ENCODE measurements at regions of chrX and their contacts with region 1.

Region 1: GRCh38 chrX:51743179-51743957 is at the start of gene GSPT2:
- DNase-seq: peak; percentile 34
- ATAC-seq: peak; percentile 99
- H3K4me3 ChIP-seq: peak within 1 kb of the TSS; percentile 85
- H3K27ac ChIP-seq: peak within 1 kb of the TSS; percentile 68
- H3K4me1 ChIP-seq: no peaks in the 10 kb centered on the region
- H3K27me3 ChIP-seq: no peaks in the 10 kb centered on the region
- CTCF ChIP-seq: no peak
- EP300 ChIP-seq: no peak
- POLR2A ChIP-seq: peak; percentile 95
- RAD21 ChIP-seq: no peak
- polyA plus RNA-seq, gene GSPT2: 3.4 to 5.1 TPM

Region 2: GRCh38 chrX:51759055-51759839 is 15.9 kb after region 1 on chrX:
- CTCF ChIA-PET with region 1: no interaction called
- POLR2A ChIA-PET with region 1: no interaction called
- RAD21 ChIA-PET with region 1: no interaction called
- SMC1A ChIA-PET with region 1: no interaction called
- in situ Hi-C with region 1: no loop called
- intact Hi-C with region 1: no loop called
- DNase-seq: no peak
- ATAC-seq: no peak
- H3K4me3 ChIP-seq: no peak overlapping the region
- H3K27ac ChIP-seq: no peak overlapping the region
- H3K4me1 ChIP-seq: no peaks in the 10 kb centered on the region
- H3K27me3 ChIP-seq: no peaks in the 10 kb centered on the region
- CTCF ChIP-seq: no peak
- EP300 ChIP-seq: no peak
- POLR2A ChIP-seq: no peak
- RAD21 ChIP-seq: no peak

Region 3: DNA sequence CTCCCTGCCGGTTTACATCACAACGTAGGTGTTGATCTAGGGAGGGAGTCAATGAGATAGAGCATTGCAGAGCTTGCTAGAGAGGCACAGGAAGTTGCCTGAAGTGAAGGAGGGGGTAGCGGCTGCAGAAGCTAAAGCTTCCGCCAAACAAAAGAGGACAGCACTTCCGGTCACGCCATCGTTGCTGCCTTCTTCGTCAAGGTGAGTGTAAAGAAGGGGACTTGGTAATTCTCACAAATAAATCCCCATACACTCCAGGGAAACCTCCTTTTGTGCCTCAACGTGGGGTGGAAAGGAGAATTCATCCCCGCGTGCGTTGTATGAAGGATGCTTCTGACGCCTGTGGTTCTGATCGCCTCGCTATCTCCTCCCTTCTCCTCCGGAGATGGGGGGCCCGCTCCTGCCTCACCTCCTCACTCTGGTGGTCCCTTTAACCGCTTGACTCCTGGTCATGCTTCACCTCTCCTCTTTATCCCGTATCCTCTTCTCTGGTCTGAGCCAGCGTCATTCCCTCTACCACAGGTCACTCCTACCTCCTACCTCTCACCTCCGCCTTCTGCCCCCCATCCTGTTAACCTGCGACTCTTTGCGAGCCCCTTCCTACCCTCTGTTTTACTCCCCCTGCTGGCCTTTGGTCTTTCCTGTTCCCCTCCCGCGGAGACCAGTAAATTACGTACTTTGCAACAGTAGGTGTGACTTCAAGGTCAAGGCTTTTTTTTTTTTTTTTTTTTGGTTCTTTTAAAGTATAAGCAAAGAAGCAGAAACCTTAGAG is 59.7 kb after region 1 on chrX:
- CTCF ChIA-PET with region 1: no interaction called
- POLR2A ChIA-PET with region 1: no interaction called
- RAD21 ChIA-PET with region 1: no interaction called
- SMC1A ChIA-PET with region 1: no interaction called
- in situ Hi-C with region 1: no loop called
- intact Hi-C with region 1: loop called (anchors 1 kb)
- DNase-seq: peak; percentile 15
- ATAC-seq: peak; percentile 96
- H3K4me3 ChIP-seq: peak overlapping the region; percentile 66
- H3K27ac ChIP-seq: peak overlapping the region; percentile 30
- H3K4me1 ChIP-seq: no peaks in the 10 kb centered on the region
- H3K27me3 ChIP-seq: no peaks in the 10 kb centered on the region
- CTCF ChIP-seq: peak; percentile 33 to 48 (median 40); a peak in 4 of 6 replicates
- EP300 ChIP-seq: no peak
- POLR2A ChIP-seq: peak; percentile 46
- RAD21 ChIP-seq: peak; percentile 37; the same call in 1 of the 2 replicates

Measured in GM12878 (cell line).